Transverse colon (tissue), 4 donors: ENCODE measurements at regions of chr3 and their contacts with region 1.

Region 1: DNA sequence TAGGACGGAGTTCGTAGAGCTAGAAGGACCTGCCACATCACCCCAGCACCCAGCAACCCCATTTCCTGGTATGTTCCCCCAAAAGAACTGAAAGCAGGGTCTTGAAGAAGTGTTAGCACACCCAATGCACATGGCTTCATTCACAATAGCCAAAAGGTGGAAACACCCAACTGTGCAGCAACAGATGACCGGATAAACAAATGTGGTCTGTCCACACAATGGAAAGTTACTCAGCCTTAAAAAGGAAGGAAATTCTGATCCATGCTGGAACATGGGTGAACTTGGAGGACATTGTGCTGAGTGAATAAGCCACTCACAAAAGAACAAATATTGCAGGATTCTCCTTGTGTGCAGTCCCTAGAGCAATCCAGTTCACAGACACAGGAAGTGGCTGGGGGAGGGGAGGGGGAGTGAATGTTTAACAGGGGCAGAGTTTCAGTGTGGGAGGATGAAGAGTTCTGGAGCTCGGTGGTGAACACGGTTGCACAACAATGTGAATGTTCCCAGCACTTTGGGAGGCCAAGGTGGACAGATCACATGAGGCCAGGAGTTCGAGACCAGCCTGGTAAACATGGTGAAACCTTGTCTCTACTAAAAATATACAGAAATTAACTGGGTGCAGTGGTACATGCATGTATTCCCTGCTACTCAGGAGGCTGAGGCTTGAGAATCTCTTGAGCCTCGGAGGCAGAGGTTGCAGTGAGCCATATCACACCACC is 157.5 kb downstream of the NUP210 start:
- DNase-seq: no peak
- H3K4me3 ChIP-seq: no peak overlapping the region
- H3K27ac ChIP-seq: no peak overlapping the region
- H3K4me1 ChIP-seq: no peaks in the 10 kb centered on the region
- H3K27me3 ChIP-seq: no peaks in the 10 kb centered on the region
- CTCF ChIP-seq: no peak
- EP300 ChIP-seq: no peak
- POLR2A ChIP-seq: no peak

Region 2: GRCh38 chr3:12367346-12367745 is 895.3 kb before region 1 on chr3:
- in situ Hi-C with region 1: no loop called
- intact Hi-C with region 1: loop called (anchors 5 kb)
- DNase-seq: no peak
- H3K4me3 ChIP-seq: no peak overlapping the region
- H3K27ac ChIP-seq: no peak overlapping the region
- H3K4me1 ChIP-seq: peaks cover 3 to 34% (median 20%) of the 10 kb centered on the region in 4 donors
- H3K27me3 ChIP-seq: no peaks in the 10 kb centered on the region
- CTCF ChIP-seq: no peak
- EP300 ChIP-seq: no peak
- POLR2A ChIP-seq: no peak

Region 3: GRCh38 chr3:13495921-13496723 is 233.5 kb after region 1 on chr3:
- in situ Hi-C with region 1: no loop called
- intact Hi-C with region 1: no loop called
- DNase-seq: peak; percentile 69
- H3K4me3 ChIP-seq: no peak overlapping the region
- H3K27ac ChIP-seq: peak overlapping the region in 1 of 4 donors; percentile 24
- H3K4me1 ChIP-seq: peaks cover 0 to 5% (median 4%) of the 10 kb centered on the region in 4 donors
- H3K27me3 ChIP-seq: no peaks in the 10 kb centered on the region
- CTCF ChIP-seq: peak; percentile 83 to 94 (median 88)
- EP300 ChIP-seq: no peak
- POLR2A ChIP-seq: no peak

Region 4: DNA sequence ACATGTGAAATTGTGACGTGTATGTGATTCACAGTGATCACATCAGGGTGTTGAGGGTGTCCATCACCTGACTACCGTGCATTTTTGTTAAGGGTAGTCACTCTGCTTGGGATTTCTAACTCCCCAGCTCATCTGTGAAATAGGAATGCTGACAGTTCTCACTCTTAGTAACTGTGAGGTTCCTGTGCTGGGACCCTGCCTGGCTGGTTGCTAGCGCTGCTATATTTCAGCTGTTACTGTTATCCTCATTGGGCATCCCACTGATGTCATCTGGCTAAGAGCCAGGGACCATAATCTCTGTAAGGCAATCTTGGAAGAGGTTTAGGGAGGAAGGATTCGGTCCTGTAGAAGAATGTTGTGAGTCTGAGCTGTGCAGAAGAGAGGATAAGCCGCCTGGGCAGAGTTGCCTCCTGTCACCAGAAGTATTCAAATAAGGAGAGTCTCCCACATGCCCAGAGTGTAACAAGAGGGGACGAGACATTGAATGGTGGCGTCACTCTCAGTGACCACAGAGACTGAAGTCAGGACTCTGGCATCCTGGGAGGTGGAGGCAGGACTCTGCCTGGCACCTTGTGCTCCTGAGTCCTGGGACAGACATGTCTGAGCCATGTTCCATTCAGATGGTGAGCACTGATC is 338.4 kb after region 1 on chr3:
- in situ Hi-C with region 1: no loop called
- intact Hi-C with region 1: no loop called
- DNase-seq: no peak
- H3K4me3 ChIP-seq: no peak overlapping the region
- H3K27ac ChIP-seq: no peak overlapping the region
- H3K4me1 ChIP-seq: peaks cover 0 to 4% (median 0%) of the 10 kb centered on the region in 4 donors
- H3K27me3 ChIP-seq: no peaks in the 10 kb centered on the region
- CTCF ChIP-seq: no peak
- EP300 ChIP-seq: no peak
- POLR2A ChIP-seq: no peak

Region 5: GRCh38 chr3:13690636-13691035 is 428.0 kb after region 1 on chr3:
- in situ Hi-C with region 1: no loop called
- intact Hi-C with region 1: no loop called
- DNase-seq: no peak
- H3K4me3 ChIP-seq: no peak overlapping the region
- H3K27ac ChIP-seq: no peak overlapping the region
- H3K4me1 ChIP-seq: no peaks in the 10 kb centered on the region
- H3K27me3 ChIP-seq: no peaks in the 10 kb centered on the region
- CTCF ChIP-seq: no peak
- EP300 ChIP-seq: no peak
- POLR2A ChIP-seq: no peak